Esophagus squamous epithelium (tissue), 5 donors: ENCODE measurements at regions of chr16 and their contacts with region 1.

Region 1: DNA sequence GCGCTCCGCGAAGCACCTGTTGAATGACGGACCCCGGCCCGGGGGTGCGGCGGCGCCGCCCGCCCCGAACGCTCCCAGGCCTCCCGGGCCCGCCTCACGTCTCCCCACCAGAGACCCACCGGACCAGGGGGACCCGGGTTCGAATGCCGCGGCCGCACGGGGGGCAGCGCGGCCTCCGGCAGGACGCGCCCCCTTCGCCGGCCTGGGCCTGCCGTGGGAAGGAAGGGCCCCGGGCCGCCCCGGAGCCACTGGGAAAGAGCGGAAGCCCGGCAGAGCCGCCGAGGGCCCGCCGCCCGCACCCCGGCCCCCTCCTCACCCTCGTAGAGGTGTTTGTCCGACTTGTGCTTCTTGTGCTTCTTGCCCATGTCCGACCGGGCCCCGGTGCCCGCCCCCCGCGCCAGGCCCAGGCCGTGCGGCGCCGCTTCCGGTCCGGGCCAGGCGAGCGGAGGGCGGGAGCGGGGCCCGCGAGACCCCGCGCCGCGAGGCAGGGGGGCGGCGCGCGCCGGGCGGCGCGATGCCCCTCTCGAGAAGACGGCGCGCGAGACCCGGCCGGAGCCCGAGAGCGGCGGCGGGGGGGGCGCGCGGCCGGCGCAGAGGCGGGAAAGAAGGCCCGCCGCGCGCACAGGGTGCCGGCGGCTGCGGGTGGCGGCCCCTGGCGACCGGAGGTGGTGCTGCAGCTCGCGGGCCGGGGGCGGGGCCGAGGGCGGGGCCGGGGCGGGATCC is at the start of gene BRD7:
- DNase-seq: no peak
- H3K4me3 ChIP-seq: peak within 1 kb of the TSS; percentile 70 to 100 (median 88)
- H3K27ac ChIP-seq: peak within 1 kb of the TSS; percentile 86 to 95 (median 92)
- H3K4me1 ChIP-seq: peaks cover 9 to 57% (median 19%) of the 10 kb centered on the region in 3 donors
- H3K27me3 ChIP-seq: no peaks in the 10 kb centered on the region
- CTCF ChIP-seq: peak in 4 of 6 experiments; percentile 25 to 61 (median 46)
- POLR2A ChIP-seq: no peak
- total RNA-seq, gene BRD7: 42.0 to 81.9 (median 51.4) TPM

Region 2: GRCh38 chr16:50665128-50665878 is 296.7 kb after region 1 on chr16:
- intact Hi-C with region 1: loop called (anchors 5 kb)
- DNase-seq: no peak
- H3K4me3 ChIP-seq: peak overlapping the region; percentile 21 to 68 (median 54)
- H3K27ac ChIP-seq: peak overlapping the region; percentile 6 to 74 (median 72)
- H3K4me1 ChIP-seq: peaks cover 7 to 44% (median 30%) of the 10 kb centered on the region in 3 donors
- H3K27me3 ChIP-seq: no peaks in the 10 kb centered on the region
- CTCF ChIP-seq: peak; percentile 89 to 96 (median 93)
- POLR2A ChIP-seq: no peak